Stomach (tissue), 19 donors: ENCODE measurements at regions of chr16 and their contacts with region 1.

Region 1: GRCh38 chr16:8674413-8675022 is at the start of gene ABAT:
- DNase-seq: peak; percentile 93 to 97
- H3K4me3 ChIP-seq: peak within 1 kb of the TSS; percentile 60 to 85 (median 74)
- H3K27ac ChIP-seq: peak within 1 kb of the TSS; percentile 36 to 73 (median 68)
- H3K4me1 ChIP-seq: peaks cover 13 to 34% (median 20%) of the 10 kb centered on the region in 4 donors
- H3K27me3 ChIP-seq: no peaks in the 10 kb centered on the region
- CTCF ChIP-seq: no peak
- EP300 ChIP-seq: no peak
- POLR2A ChIP-seq: no peak
- total RNA-seq, gene ABAT: 2.9 to 10.3 (median 8.8) TPM

Region 2: DNA sequence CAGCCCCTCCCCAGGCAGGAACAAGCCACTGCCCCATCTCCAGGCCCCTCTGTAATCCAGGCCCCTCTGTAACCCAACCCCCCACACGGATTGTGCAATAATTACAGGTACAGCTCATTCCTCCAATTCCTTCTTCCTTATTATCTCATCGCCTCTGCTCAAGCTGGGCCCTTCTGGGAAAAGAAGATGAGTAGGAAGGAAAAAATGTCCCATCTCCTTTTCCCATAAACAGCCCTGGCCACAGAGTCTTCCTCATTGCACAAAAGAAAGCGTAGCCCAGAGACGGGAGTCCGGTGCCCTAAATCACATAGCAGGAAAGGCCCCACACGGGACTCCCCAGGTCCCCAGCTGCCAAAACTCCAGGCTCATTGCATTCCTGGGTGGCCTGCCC is 204.0 kb after region 1 on chr16:
- intact Hi-C with region 1: loop called (anchors 5 kb)
- DNase-seq: no peak
- H3K4me3 ChIP-seq: no peak overlapping the region
- H3K27ac ChIP-seq: peak overlapping the region in 2 of 5 donors; percentile 31 to 38
- H3K4me1 ChIP-seq: peaks cover 0 to 7% (median 6%) of the 10 kb centered on the region in 4 donors
- H3K27me3 ChIP-seq: peaks cover 0 to 17% (median 0%) of the 10 kb centered on the region in 3 donors
- CTCF ChIP-seq: no peak
- EP300 ChIP-seq: no peak
- POLR2A ChIP-seq: no peak